K562 (cell line): ENCODE measurements at regions of chr6 and their contacts with region 1.

Region 1: GRCh38 chr6:14210663-14211561 is 93.3 kb downstream of the CD83 start:
- DNase-seq: peak; percentile 97 to 100 (median 98)
- ATAC-seq: peak; percentile 99
- H3K4me3 ChIP-seq: peak overlapping the region; percentile 67
- H3K27ac ChIP-seq: 0 out of 3 replicates have a peak overlapping the region, but pooled peaks have one; percentile 49
- H3K4me1 ChIP-seq: peaks cover 13 to 17% of the 10 kb centered on the region in 2 experiments
- H3K27me3 ChIP-seq: peaks cover 4 to 15% of the 10 kb centered on the region in 2 experiments; a peak in 4 of 5 replicates
- CTCF ChIP-seq: peak; percentile 55 to 93 (median 81); a peak in 5 of 6 replicates
- EP300 ChIP-seq: no peak; the same call in 1 of the 2 replicates
- POLR2A ChIP-seq: peak; percentile 72
- RAD21 ChIP-seq: peak; percentile 94 to 98

Region 2: GRCh38 chr6:14066782-14067406 is 144.0 kb before region 1 on chr6:
- CTCF ChIA-PET with region 1: no interaction called
- POLR2A ChIA-PET with region 1: no interaction called
- in situ Hi-C with region 1: no loop called
- intact Hi-C with region 1: no loop called
- DNase-seq: peak; percentile 69 to 83 (median 74)
- ATAC-seq: peak; percentile 94
- H3K4me3 ChIP-seq: no peak overlapping the region
- H3K27ac ChIP-seq: no peak overlapping the region
- H3K4me1 ChIP-seq: no peaks in the 10 kb centered on the region
- H3K27me3 ChIP-seq: no peaks in the 10 kb centered on the region
- CTCF ChIP-seq: peak; percentile 77 to 92 (median 79)
- EP300 ChIP-seq: no peak
- POLR2A ChIP-seq: no peak
- RAD21 ChIP-seq: peak; percentile 96 to 98

Region 3: GRCh38 chr6:14283600-14284235 is 72.8 kb after region 1 on chr6:
- CTCF ChIA-PET with region 1: no interaction called
- POLR2A ChIA-PET with region 1: no interaction called
- in situ Hi-C with region 1: no loop called
- intact Hi-C with region 1: loop called (anchors 5 kb)
- DNase-seq: no peak
- ATAC-seq: no peak
- H3K4me3 ChIP-seq: no peak overlapping the region
- H3K27ac ChIP-seq: no peak overlapping the region
- H3K4me1 ChIP-seq: peaks cover 0 to 4% of the 10 kb centered on the region in 2 experiments; a peak in 1 of 5 replicates
- H3K27me3 ChIP-seq: peaks cover 13 to 38% of the 10 kb centered on the region in 2 experiments; a peak in 4 of 5 replicates
- CTCF ChIP-seq: peak in 1 of 3 experiments; percentile 14; a peak in 1 of 6 replicates
- EP300 ChIP-seq: no peak
- POLR2A ChIP-seq: no peak
- RAD21 ChIP-seq: no peak; a peak in 1 of 4 replicates

Region 4: DNA sequence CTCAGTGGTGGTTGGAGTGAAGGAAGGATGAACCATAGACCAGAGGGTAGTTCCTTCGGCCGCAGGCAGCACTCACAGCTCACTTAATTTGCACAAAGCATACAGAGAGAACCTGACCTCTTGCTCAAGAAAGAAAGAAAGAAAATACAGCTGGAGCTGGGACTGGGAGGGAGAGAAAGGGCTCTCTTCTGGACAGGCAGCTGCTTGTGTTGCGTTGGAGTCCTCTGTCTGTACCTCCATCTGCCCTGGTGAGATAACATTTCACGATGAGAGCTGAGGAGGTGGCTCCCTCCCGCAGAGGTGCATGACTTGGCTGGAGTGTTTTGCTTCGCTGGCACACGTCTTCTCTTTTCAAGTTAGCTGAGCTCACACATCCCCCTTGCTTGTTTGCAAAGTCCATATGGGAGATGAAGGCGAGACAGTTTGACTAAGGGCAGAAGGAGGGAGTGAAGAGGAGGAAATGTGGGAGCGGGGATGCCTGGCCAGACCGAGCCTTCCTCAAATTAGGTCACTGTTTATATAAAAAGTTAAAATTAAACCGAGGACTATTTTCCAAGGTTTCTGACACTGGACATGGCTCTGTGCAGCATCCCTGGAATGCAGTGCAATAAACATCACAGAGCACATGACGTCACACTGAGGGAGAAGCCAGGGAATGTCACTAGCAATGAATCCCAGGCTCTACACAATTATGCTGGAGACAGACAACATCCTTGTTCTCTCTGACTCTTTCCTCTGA is 266.1 kb after region 1 on chr6:
- CTCF ChIA-PET with region 1: no interaction called
- POLR2A ChIA-PET with region 1: interaction called, 3 read pairs
- in situ Hi-C with region 1: no loop called
- intact Hi-C with region 1: loop called (anchors 2 kb)
- DNase-seq: peak; percentile 94 to 97 (median 96)
- ATAC-seq: peak; percentile 95
- H3K4me3 ChIP-seq: no peak overlapping the region; the same call in 1 of the 2 replicates
- H3K27ac ChIP-seq: peak overlapping the region; percentile 75
- H3K4me1 ChIP-seq: peaks cover 28 to 53% of the 10 kb centered on the region in 2 experiments; a peak in 4 of 5 replicates
- H3K27me3 ChIP-seq: no peaks in the 10 kb centered on the region
- CTCF ChIP-seq: peak in 1 of 3 experiments; percentile 6; a peak in 1 of 6 replicates
- EP300 ChIP-seq: peak; percentile 95
- POLR2A ChIP-seq: no peak
- RAD21 ChIP-seq: peak; percentile 44 to 49

Region 5: DNA sequence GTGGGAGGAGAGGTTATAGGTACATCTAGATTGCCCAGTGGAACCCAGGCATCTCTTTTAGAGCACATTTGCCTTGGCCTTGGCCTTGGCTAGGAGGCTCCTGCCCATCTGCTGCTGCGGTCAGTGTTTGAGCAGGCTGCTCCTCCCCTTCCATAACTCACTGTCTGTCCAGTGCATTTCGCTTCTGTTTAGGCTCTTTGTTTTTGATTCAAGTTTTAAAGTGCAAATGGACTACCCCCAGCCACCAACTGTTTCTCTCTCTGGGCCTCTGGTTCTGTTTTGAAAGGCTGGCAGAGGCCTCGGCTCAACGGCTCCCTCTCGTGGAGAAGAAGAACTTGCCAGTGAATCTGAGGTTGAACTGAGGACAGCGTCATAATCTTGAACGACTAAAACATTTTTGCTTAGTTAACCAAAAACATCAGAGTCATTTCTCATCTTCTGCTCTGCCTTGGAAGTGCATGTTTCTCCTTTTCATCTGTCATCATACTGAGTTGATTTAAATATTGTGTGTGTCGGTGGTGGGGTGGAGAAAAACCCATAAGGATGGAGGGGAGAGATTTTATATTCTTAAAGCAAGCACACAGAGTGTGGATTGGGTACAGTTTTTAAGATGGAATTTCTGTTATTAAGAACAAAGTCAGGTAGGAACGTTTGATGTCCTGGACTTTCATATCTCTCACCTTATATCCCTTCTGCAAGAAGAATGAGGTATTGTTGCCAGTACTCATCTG is 1280.5 kb after region 1 on chr6:
- CTCF ChIA-PET with region 1: no interaction called
- POLR2A ChIA-PET with region 1: no interaction called
- in situ Hi-C with region 1: no loop called
- intact Hi-C with region 1: loop called (anchors 1 kb)
- DNase-seq: peak; percentile 66 to 78 (median 71)
- ATAC-seq: peak; percentile 93
- H3K4me3 ChIP-seq: no peak overlapping the region
- H3K27ac ChIP-seq: no peak overlapping the region
- H3K4me1 ChIP-seq: peaks cover 2 to 5% of the 10 kb centered on the region in 2 experiments; a peak in 3 of 5 replicates
- H3K27me3 ChIP-seq: no peaks in the 10 kb centered on the region
- CTCF ChIP-seq: peak; percentile 85 to 91 (median 88)
- EP300 ChIP-seq: 0 out of 2 replicates have a peak, but pooled peaks have one; percentile 11
- POLR2A ChIP-seq: no peak
- RAD21 ChIP-seq: peak; percentile 81 to 91